A673 (cell line): ENCODE measurements at regions of chr14 and their contacts with region 1.

Region 1: DNA sequence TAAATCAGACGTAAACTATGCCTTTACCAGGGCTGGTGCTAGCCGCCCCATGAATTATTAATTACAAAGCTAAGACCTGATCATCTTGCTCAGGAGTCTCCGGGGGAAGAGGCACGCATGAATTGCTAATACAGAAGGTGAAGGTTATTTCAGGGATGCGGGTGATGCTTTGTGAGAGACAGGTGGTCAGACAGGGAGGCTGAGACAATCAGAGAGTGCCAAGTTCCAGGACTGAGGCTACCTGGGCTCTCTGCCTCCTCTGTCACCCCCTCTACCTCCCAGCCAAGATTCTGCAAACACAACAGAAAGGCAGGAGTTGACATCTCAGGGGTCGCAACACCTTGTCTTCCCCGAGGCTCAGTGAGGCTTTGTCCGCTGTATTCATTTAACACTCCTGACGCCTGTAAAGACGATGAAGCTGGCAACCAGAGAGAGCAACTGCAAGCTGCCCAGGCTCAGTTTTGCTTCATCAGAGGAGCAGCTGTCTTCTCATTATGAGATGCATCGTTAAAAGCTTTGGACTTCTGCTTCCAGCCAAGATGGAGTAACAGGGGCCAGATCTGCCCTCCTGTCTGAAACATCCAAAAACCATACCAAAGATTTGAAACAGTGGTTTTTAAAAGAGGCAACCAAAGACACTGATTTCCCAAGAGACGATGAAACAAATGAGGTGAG is 46.6 kb downstream of the PRIMA1 start:
- DNase-seq: no peak
- H3K4me3 ChIP-seq: no peak overlapping the region
- H3K27ac ChIP-seq: no peak overlapping the region
- H3K4me1 ChIP-seq: no peaks in the 10 kb centered on the region
- H3K27me3 ChIP-seq: peaks cover 7% of the 10 kb centered on the region
- CTCF ChIP-seq: no peak

Region 2: DNA sequence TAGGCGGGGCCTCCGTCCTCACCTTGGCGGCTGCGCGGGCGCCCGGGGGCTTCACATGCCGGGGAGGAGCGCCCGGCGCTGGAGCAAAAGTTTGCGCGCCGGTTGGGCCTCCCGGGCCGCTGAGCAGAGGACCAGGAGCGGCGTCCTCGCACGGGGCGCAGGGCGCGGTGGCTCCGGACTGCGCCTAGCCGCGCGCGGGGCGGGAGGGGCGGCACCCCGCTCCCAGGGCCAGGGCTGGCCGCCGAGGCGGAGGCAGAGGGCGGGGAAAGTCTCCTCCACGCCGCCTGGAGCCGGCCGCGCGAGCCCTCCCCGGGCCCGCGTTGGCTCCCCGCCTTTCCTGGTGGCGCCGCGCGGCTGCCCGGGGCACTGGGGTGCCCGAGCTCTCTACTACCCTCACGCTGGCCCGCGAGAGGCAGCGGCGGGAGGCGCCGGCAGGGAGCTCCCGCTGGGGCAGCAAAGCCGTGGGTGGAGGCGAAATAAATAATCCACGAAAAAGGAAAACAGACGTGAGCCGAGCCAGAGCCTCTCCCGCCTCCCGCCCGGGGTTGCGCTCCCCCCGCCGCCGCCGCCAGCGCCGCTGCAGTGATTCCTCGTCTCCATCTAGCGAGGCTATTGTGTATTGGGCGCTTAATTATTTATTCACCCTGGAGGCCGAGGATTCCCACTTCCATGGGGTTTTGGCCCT is 47.0 kb after region 1 on chr14:
- CTCF ChIA-PET with region 1: interaction called, 22 read pairs
- POLR2A ChIA-PET with region 1: no interaction called
- intact Hi-C with region 1: no loop called
- DNase-seq: peak; percentile 26
- H3K4me3 ChIP-seq: peak overlapping the region; percentile 40
- H3K27ac ChIP-seq: no peak overlapping the region
- H3K4me1 ChIP-seq: no peaks in the 10 kb centered on the region
- H3K27me3 ChIP-seq: peaks cover 36% of the 10 kb centered on the region
- CTCF ChIP-seq: no peak

Region 3: DNA sequence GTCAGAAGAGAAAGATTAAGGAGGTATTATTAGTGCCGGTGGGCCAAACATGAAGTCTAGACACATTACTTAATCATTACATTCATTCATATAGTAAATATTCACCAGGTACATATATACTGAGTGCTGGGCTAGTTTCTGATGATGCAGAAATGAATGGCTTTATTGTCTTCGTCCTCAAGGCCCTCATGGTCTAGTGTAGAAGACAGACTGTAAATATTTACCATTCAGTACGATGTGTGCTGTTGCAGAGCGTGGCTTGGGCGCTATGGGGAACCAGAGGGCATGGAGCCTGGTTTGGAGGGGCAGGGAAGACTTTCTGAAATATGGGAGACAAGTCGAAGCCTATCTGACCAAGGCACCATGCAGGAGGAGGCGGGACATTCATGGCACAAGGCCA is 1907.5 kb after region 1 on chr14:
- CTCF ChIA-PET with region 1: no interaction called
- POLR2A ChIA-PET with region 1: no interaction called
- intact Hi-C with region 1: no loop called
- DNase-seq: no peak
- H3K4me3 ChIP-seq: no peak overlapping the region
- H3K27ac ChIP-seq: no peak overlapping the region
- H3K4me1 ChIP-seq: no peaks in the 10 kb centered on the region
- H3K27me3 ChIP-seq: no peaks in the 10 kb centered on the region
- CTCF ChIP-seq: no peak